K562 (cell line): ENCODE measurements at regions of chr12 and their contacts with region 1.

Region 1: GRCh38 chr12:92570056-92570753 is 132.6 kb upstream of the PLEKHG7 start:
- DNase-seq: peak; percentile 44 to 84 (median 47)
- ATAC-seq: peak; percentile 85
- H3K4me3 ChIP-seq: no peak overlapping the region
- H3K27ac ChIP-seq: no peak overlapping the region
- H3K4me1 ChIP-seq: no peaks in the 10 kb centered on the region
- H3K27me3 ChIP-seq: no peaks in the 10 kb centered on the region
- CTCF ChIP-seq: peak; percentile 53 to 77 (median 73); a peak in 5 of 6 replicates
- EP300 ChIP-seq: no peak
- POLR2A ChIP-seq: no peak
- RAD21 ChIP-seq: peak; percentile 97 to 98

Region 2: GRCh38 chr12:91382081-91382543 is 1188.1 kb before region 1 on chr12:
- CTCF ChIA-PET with region 1: interaction called, 24 read pairs
- POLR2A ChIA-PET with region 1: no interaction called
- in situ Hi-C with region 1: loop called (anchors 5 kb)
- intact Hi-C with region 1: loop called (anchors 1 kb)
- DNase-seq: peak; percentile 42 to 85 (median 50)
- ATAC-seq: peak; percentile 84
- H3K4me3 ChIP-seq: no peak overlapping the region
- H3K27ac ChIP-seq: no peak overlapping the region
- H3K4me1 ChIP-seq: no peaks in the 10 kb centered on the region
- H3K27me3 ChIP-seq: no peaks in the 10 kb centered on the region
- CTCF ChIP-seq: peak; percentile 66 to 88 (median 82)
- EP300 ChIP-seq: no peak
- POLR2A ChIP-seq: no peak
- RAD21 ChIP-seq: peak; percentile 79 to 83

Region 3: GRCh38 chr12:91811481-91812287 is 758.5 kb before region 1 on chr12:
- CTCF ChIA-PET with region 1: no interaction called
- POLR2A ChIA-PET with region 1: no interaction called
- in situ Hi-C with region 1: loop called (anchors 25 kb)
- intact Hi-C with region 1: loop called (anchors 5 kb)
- DNase-seq: peak; percentile 36 to 65 (median 55)
- ATAC-seq: peak; percentile 90
- H3K4me3 ChIP-seq: no peak overlapping the region
- H3K27ac ChIP-seq: no peak overlapping the region
- H3K4me1 ChIP-seq: no peaks in the 10 kb centered on the region
- H3K27me3 ChIP-seq: no peaks in the 10 kb centered on the region
- CTCF ChIP-seq: peak; percentile 53 to 74 (median 64)
- EP300 ChIP-seq: no peak
- POLR2A ChIP-seq: no peak
- RAD21 ChIP-seq: peak; percentile 63 to 65

Region 4: GRCh38 chr12:92002673-92003382 is 567.4 kb before region 1 on chr12:
- CTCF ChIA-PET with region 1: no interaction called
- POLR2A ChIA-PET with region 1: no interaction called
- in situ Hi-C with region 1: no loop called
- intact Hi-C with region 1: loop called (anchors 10 kb)
- DNase-seq: peak; percentile 15 to 78 (median 43)
- ATAC-seq: peak; percentile 85
- H3K4me3 ChIP-seq: no peak overlapping the region
- H3K27ac ChIP-seq: peak overlapping the region; percentile 65
- H3K4me1 ChIP-seq: peaks cover 4 to 31% of the 10 kb centered on the region in 2 experiments; a peak in 4 of 5 replicates
- H3K27me3 ChIP-seq: no peaks in the 10 kb centered on the region
- CTCF ChIP-seq: no peak
- EP300 ChIP-seq: peak; percentile 86; the same call in 1 of the 2 replicates
- POLR2A ChIP-seq: no peak
- RAD21 ChIP-seq: 0 out of 4 replicates have a peak, but pooled peaks of 1 of the 2 experiments have one; percentile 13

Region 5: DNA sequence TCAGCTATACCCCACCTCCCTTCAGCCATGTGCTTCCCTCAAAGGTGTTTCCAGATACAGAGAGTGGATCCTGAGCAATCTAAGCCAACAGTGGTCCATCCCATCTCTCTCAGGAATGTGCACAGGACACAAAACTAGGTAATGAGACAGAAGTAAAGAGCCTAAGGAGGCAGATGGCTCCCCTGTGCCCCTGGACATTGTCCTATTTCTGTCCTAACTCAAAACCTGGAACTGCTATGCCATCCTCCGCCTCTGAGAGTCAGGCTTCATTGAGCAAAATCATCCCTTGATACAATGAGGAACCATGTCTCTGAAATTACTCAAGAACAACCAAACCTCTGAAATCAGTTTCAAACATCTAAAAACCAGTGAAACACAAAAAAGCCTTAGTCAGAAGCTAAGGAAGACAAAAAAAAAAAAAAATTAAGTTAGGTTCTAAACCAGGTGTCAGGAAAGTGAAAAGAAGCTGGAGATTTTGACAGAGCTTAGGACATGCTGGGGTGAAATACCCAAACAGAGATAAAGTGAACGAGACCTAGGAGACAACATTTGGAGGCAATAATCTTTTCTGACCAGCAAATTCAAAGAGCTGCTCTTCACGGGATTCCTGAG is 67.7 kb before region 1 on chr12:
- CTCF ChIA-PET with region 1: interaction called, 5 read pairs
- POLR2A ChIA-PET with region 1: no interaction called
- in situ Hi-C with region 1: no loop called
- intact Hi-C with region 1: loop called (anchors 1 kb)
- DNase-seq: peak in 1 of 4 experiments; percentile 28
- ATAC-seq: peak; percentile 83
- H3K4me3 ChIP-seq: no peak overlapping the region
- H3K27ac ChIP-seq: no peak overlapping the region
- H3K4me1 ChIP-seq: no peaks in the 10 kb centered on the region
- H3K27me3 ChIP-seq: no peaks in the 10 kb centered on the region
- CTCF ChIP-seq: peak in 2 of 3 experiments; percentile 31 to 49; a peak in 3 of 6 replicates
- EP300 ChIP-seq: no peak
- POLR2A ChIP-seq: no peak
- RAD21 ChIP-seq: peak; percentile 40 to 51